ENCODE measurements at regions of chr3 and their contacts with region 1.

Region 1: DNA sequence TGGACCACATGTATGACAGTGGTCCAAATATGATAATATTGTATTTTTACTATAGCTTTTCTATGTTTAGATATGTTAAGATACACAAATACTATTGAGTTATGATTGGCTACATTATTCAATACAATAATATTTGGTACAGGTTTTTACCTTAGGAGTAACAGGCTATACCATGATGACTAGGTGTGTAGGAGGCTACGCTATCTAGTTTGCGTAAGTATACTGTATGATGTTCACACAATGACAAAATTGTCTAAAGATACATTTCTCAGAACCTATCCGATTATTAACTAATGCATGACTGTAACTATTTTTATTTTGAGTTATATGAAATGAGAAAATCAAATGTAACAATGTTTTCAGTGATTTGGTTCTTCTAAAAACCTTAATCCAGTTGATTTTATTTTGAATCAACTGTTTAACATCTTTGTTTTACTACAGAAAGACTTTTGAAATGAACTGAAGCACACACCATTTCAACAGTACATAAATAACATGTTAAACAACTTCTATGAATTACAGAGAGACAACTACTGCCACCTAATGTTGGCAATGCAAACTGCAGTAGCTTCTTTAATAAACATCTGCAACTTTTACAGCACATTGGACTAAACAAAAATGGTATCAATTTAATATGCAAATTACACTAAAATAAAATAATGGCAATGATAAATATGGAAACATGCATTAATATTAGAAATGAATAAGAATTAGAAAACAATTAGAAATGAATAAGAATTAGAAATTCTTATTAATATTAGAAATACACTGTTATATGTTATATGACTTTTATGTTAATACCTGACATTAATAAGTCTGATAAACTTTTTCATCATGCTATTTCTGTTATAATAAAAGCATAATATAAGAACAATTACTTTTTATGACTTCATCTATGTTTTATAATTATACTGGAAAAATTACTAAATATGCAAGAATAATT is 255.7 kb downstream of the MBNL1 start:
- DNase-seq: peak; percentile 21
- H3K4me3 ChIP-seq: no peak overlapping the region
- H3K27ac ChIP-seq: no peak overlapping the region
- H3K27me3 ChIP-seq: no peaks in the 10 kb centered on the region
- CTCF ChIP-seq: peak; percentile 91

Region 2: DNA sequence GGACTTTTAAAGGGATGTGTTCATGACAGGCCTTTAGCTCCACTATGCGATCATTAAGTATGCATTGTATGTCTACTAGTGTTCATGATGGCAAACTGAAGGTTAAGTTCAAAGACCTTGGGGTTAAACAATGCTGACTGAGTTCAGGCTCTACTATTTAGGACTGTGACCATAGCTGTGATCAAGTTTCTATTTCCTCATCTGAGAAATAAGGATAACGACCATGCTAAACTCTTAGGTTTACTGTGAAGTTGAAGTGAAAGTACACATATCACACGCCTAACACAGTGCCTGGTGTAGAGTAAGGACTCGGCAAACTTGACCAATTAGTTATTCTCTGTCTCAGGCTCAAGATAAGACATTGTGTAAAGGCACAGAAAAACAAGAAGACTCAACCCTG is 12.6 kb before region 1 on chr3:
- CTCF ChIA-PET with region 1: interaction called, 16 read pairs
- POLR2A ChIA-PET with region 1: no interaction called
- DNase-seq: no peak
- H3K4me3 ChIP-seq: no peak overlapping the region
- H3K27ac ChIP-seq: no peak overlapping the region
- H3K27me3 ChIP-seq: no peaks in the 10 kb centered on the region
- CTCF ChIP-seq: no peak

Region 3: DNA sequence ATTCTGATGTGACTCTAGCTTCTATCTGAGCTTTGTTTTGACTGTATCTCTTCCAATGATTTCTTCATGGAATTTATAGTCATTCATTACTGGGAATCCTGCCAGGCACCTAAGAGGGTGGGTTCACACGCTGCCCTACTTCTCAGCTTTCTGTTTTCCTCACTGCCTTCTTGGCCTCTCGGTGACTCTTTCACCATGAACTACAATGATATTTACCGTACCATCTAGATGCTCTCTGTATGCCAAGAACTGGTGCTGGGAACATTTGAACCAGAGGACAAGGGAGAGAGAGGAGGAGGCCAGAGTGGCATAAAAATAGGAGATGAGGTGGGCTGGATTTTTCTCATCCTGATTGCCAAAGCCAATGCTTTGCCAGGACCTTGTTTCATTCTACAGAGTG is 30.5 kb after region 1 on chr3:
- CTCF ChIA-PET with region 1: no interaction called
- POLR2A ChIA-PET with region 1: no interaction called
- DNase-seq: no peak
- H3K4me3 ChIP-seq: no peak overlapping the region
- H3K27ac ChIP-seq: no peak overlapping the region
- H3K27me3 ChIP-seq: no peaks in the 10 kb centered on the region
- CTCF ChIP-seq: no peak

Region 4: DNA sequence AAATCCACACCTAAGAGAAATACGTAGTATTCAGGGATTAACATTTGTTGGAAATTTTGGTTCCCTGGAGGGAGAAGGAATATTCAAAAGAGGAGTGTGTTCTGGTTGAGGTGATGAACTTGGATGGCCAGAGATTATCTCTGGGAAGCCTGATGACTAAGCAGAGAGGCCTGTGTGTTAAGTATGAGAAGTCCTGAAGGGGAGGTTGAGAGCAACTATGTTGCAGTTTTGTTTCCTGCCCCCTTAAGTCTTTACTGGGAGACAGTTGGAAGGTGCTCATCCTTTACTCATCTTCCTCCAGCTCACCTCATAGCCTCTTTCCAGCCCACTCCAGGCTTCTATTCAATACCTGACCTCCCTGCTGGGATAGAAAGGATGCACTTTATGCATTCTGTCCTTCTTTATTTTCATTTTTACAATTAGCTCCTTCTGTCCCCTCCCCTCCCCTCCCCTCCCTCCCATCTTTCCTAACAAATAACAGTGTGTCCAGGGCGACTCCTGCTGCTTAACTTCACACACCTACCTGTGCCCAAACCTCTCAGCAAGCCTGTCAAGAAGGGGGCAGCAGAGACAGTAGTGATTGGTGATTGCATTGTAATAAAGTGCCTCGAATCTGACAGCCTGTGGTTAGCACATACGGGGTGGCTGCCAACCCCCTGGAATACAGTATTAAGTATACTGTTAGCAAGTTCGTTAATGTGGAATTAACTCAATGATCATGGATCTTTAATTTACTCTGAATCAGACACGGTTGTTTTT is 649.5 kb after region 1 on chr3:
- CTCF ChIA-PET with region 1: no interaction called
- POLR2A ChIA-PET with region 1: no interaction called
- DNase-seq: no peak
- H3K4me3 ChIP-seq: no peak overlapping the region
- H3K27ac ChIP-seq: no peak overlapping the region
- H3K27me3 ChIP-seq: no peaks in the 10 kb centered on the region
- CTCF ChIP-seq: no peak